Endothelial cell of umbilical vein (primary cell): ENCODE measurements at regions of chr16 and their contacts with region 1.

Region 1: DNA sequence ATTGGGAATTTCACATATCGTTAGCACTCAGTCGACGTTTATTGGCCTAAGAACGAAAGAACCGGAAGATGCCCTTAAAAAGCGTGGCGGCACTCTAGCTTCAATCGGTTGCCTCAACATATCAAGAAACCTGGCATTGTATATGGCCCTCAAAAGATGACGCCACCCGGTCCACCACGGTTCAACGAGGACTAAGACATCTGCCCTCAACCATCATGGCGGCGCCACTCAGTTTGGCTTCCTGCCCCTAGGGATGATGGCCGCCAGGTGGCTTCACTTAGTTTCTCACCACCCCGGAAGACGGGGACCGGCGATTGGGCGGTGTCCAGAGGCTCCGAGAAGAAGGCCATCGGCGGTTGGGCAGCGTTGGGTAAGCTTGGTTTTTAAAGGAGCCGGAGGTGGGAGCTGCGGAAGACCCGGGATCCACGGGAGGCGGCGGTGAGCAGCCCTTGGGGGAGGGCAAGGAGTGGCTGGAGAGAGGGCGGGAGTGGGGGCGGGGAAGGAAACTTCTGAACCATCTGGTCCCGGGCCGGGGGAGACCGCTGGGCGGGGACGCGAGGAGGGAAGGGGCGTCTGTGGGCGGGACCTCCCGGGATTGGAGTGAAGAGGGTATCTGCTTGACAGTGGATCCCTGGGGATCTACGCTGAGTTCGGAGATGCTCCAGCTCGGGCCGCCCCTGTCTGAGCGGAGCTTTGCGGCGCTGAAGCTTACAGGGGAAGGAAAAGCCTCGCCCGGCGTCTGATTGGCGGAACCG is at the start of gene PRR14:
- DNase-seq: peak; percentile 100
- H3K4me3 ChIP-seq: peak within 1 kb of the TSS; percentile 36 to 95 (median 66)
- H3K27ac ChIP-seq: peak within 1 kb of the TSS; percentile 52
- H3K4me1 ChIP-seq: peaks cover 11% of the 10 kb centered on the region
- H3K27me3 ChIP-seq: no peaks in the 10 kb centered on the region
- CTCF ChIP-seq: no peak
- POLR2A ChIP-seq: peak; percentile 25
- total RNA-seq, gene PRR14: 57.0 and 70.0 TPM in 2 replicates

Region 2: DNA sequence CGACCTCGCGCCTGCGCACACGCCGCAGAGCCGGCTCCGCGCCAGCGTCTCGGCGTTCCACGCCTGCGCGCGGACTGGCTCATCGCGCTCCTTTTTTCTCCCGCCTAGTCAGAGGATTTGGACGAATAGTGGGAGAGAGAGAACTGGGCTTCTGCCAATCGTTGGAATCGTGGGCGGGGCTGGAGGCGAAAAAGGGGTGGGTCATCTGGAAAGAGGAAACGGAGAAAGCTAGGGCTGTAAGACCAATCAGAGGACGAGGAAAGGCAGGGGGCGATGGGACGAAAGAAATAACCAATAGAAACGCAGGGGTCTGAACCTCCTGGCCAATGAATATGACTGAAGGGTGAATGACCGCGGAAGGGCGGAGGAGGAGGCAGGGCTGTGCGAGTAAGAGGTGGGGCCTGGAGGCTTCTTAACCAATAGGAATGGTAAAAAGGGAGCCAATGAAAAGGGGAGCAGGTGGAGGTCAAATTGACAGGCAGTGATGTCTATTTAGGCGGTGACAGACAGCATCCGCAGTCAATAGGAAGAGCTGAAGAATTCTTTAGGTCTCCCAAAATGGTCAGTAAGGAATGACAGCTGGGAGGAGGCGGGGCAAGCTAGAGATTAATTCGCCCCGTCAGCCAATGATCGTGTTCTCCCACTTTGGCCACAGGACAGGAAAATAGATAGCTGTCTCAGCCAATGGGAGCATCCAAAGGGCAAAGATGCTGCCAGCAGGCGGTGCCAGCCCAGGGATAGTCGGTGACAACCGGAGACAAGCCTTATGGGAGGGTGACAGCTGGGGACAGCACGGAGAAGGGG is 279.9 kb before region 1 on chr16 and contains the start of gene TBC1D10B:
- CTCF ChIA-PET with region 1: no interaction called
- POLR2A ChIA-PET with region 1: no interaction called
- dilution Hi-C with region 1: no loop called
- intact Hi-C with region 1: loop called (anchors 2 kb)
- DNase-seq: peak; percentile 100
- H3K4me3 ChIP-seq: peak within 1 kb of the TSS; percentile 49 to 83 (median 70)
- H3K27ac ChIP-seq: peak within 1 kb of the TSS; percentile 42
- H3K4me1 ChIP-seq: peaks cover 24% of the 10 kb centered on the region
- H3K27me3 ChIP-seq: no peaks in the 10 kb centered on the region
- CTCF ChIP-seq: peak; percentile 4 to 28
- POLR2A ChIP-seq: no peak
- total RNA-seq, gene TBC1D10B: 57.4 and 63.0 TPM in 2 replicates

Region 3: GRCh38 chr16:30628627-30629540 is 21.7 kb before region 1 on chr16:
- CTCF ChIA-PET with region 1: interaction called, 4 read pairs
- POLR2A ChIA-PET with region 1: interaction called, 8 read pairs
- dilution Hi-C with region 1: no loop called
- intact Hi-C with region 1: loop called (anchors 1 kb)
- DNase-seq: peak; percentile 77
- H3K4me3 ChIP-seq: peak overlapping the region in 1 of 3 experiments; percentile 27
- H3K27ac ChIP-seq: no peak overlapping the region
- H3K4me1 ChIP-seq: peaks cover 3% of the 10 kb centered on the region
- H3K27me3 ChIP-seq: peaks cover 2% of the 10 kb centered on the region in 2 experiments
- CTCF ChIP-seq: peak; percentile 85 to 91
- POLR2A ChIP-seq: no peak